Left colon (tissue), 2 donors: ENCODE measurements at regions of chr10 and their contacts with region 1.

Region 1: DNA sequence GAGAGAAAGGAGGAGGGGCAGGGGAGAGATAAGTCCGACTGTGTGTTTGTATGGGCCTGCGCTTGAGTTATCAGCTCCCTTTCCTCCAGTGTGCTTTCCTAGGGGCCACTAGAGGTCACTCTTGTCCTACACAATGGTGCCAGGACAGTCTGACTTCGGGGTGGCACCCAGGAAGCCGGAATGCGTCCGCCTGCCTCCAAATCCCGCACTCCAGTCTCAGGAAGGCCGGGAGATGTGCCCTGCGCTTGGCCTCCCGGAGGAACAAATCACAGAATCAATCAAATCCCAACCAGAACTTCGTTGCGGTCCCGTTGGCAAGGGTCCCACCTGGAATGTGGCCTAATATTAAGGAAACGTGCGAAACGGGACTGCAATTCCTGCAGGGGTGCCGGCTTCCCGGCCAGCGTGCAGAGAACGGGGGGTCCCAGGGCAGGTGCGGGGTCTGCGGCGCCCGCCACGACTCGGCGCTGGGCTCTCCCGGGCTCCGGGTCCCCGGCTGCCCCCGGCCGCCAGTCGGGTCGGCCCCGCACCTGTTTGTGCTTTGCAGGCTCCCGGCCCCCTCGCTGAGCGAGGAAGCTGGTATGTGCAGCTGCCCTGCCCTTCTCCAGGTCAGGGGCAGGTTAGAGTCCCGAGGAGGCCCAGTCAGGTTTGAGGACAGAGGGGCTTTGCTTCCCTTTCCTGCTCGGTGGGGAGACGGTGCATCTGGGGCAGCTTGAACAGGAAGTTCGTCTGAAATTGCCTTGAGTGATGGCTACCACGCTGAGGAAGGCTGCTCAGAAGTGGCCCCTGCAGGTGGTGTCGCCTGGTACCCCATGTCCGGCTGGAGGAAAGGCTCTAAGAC is 21.0 kb upstream of the HPS1 start:
- DNase-seq: peak; percentile 77 to 78
- ATAC-seq: peak; percentile 96

Region 2: DNA sequence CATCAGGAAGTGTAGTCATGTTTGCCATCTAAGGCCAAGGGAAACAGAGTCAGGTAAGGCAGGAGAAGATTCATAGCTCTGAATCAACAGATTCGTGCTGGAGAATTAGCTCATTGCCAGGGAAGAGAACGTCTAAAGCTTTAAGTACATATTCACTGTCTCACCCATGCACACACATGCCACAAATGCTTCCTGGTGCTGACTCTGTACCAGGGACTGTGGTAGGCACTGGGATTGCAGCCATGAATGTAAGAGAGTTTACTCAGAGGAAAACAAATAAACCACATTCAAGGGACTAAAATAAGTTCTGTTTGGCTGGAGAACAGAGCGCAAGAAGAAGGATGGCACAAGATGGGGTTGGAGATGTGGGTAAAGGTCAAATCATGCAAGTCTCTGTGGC is 68.8 kb after region 1 on chr10:
- intact Hi-C with region 1: no loop called
- DNase-seq: peak; percentile 23 to 32
- ATAC-seq: peak; percentile 94

Region 3: DNA sequence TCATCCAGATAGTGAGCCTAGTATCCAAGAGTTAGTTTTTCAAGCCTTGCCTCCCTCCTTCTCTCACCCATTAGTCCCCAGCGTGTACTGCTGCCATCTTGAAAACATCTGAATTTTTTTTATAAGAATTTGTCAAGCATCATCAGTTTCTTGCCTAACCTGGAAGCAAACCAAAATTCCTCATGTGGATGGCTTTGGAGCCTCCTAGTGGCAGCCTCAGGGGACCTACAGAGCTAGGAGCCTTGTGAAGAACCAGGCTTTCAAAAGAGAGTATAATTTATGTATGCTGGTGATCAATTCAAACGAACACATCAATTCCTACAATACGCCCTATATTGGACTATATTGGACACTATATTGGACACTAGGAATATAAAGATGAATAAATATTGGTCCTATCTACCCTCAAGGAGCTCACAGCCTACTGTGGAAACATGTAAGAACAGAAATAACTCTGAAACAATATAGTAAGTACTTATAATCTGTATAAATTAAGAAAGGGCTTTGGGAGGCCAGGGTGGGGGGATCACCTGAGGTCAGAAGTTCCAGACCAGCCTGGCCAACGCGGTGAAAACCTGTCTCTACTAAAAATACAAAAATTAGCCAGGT is 704.5 kb after region 1 on chr10:
- intact Hi-C with region 1: loop called in 1 of 2 experiments (anchors 10 kb)
- DNase-seq: peak in 1 of 2 donors; percentile 49
- ATAC-seq: peak; percentile 48

Region 4: DNA sequence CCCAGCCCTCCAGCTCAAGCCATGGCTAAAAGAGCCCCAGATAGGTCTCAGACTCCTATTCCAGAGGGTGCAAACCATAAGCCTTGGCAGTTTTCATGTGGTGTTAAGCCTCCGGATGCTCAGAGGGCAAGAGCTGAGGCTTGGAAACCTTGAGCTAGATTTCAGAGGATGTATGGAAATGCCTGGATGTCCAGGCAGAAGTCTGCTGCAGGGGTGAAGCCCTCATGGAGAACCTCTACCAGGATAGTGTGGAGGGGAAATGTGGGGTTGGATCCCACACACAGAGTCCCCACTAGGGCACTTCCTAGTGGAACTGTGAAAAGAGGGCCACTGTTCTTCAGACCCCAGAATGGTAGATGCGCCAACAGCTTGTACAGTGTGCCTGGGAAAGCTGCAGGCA is 781.1 kb after region 1 on chr10:
- intact Hi-C with region 1: loop called in 1 of 2 experiments (anchors 2 kb)
- DNase-seq: no peak
- ATAC-seq: no peak